ENCODE measurements at regions of chr20 and their contacts with region 1.

Region 1: GRCh38 chr20:9609887-9610502 is 95.6 kb downstream of the LAMP5 start:
- DNase-seq: peak; percentile 57 to 69 (median 63)
- H3K4me3 ChIP-seq: no peak overlapping the region
- H3K4me3 Mint-ChIP-seq: no peak overlapping the region
- H3K27ac ChIP-seq: no peak overlapping the region
- H3K27ac Mint-ChIP-seq: no peak overlapping the region
- H3K4me1 ChIP-seq: no peaks in the 10 kb centered on the region
- H3K4me1 Mint-ChIP-seq: no peaks in the 10 kb centered on the region
- H3K27me3 ChIP-seq: peaks cover 42 to 44% of the 10 kb centered on the region in 2 donors
- H3K27me3 Mint-ChIP-seq: peaks cover 34 to 48% (median 41%) of the 10 kb centered on the region in 3 donors
- CTCF ChIP-seq: peak; percentile 77

Region 2: GRCh38 chr20:9407805-9408421 is 202.1 kb before region 1 on chr20:
- intact Hi-C with region 1: loop called (anchors 1 to 2 kb)
- DNase-seq: peak; percentile 59 to 74 (median 65)
- H3K4me3 ChIP-seq: no peak overlapping the region
- H3K4me3 Mint-ChIP-seq: no peak overlapping the region
- H3K27ac ChIP-seq: no peak overlapping the region
- H3K27ac Mint-ChIP-seq: no peak overlapping the region
- H3K4me1 ChIP-seq: no peaks in the 10 kb centered on the region
- H3K4me1 Mint-ChIP-seq: no peaks in the 10 kb centered on the region
- H3K27me3 ChIP-seq: no peaks in the 10 kb centered on the region
- H3K27me3 Mint-ChIP-seq: peaks cover 0 to 4% (median 1%) of the 10 kb centered on the region in 3 donors
- CTCF ChIP-seq: peak; percentile 87

Region 3: GRCh38 chr20:9474835-9475415 is 135.1 kb before region 1 on chr20:
- intact Hi-C with region 1: loop called in 1 of 2 experiments (anchors 10 kb)
- DNase-seq: no peak
- H3K4me3 ChIP-seq: no peak overlapping the region
- H3K4me3 Mint-ChIP-seq: no peak overlapping the region
- H3K27ac ChIP-seq: no peak overlapping the region
- H3K27ac Mint-ChIP-seq: no peak overlapping the region
- H3K4me1 ChIP-seq: no peaks in the 10 kb centered on the region
- H3K4me1 Mint-ChIP-seq: peaks cover 6% of the 10 kb centered on the region
- H3K27me3 ChIP-seq: no peaks in the 10 kb centered on the region
- H3K27me3 Mint-ChIP-seq: peaks cover 0 to 6% (median 2%) of the 10 kb centered on the region in 3 donors
- CTCF ChIP-seq: no peak

Region 4: DNA sequence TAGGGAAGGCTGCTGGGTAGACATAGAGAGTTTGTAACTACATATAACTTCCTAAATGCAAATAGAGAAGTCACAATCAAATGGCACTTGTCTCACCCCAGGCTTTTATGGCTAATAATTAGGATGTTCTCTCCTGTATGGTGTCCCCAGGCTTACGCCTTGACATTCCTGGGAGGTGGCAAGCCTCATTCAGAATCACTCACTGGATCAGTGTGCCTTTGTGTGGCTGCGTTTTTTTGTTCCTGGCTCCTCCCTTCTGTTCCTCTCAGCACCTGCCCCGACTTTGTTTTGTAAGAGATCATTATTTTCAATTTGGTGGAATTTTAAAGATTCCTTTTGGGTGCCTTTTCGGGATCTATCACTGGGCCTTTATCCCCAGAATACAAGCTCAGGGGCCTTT is 89.9 kb before region 1 on chr20:
- intact Hi-C with region 1: loop called in 1 of 2 experiments (anchors 10 kb)
- DNase-seq: no peak
- H3K4me3 ChIP-seq: no peak overlapping the region
- H3K4me3 Mint-ChIP-seq: peak overlapping the region in 1 of 2 donors; percentile 59
- H3K27ac ChIP-seq: no peak overlapping the region
- H3K27ac Mint-ChIP-seq: no peak overlapping the region
- H3K4me1 ChIP-seq: peaks cover 28 to 31% of the 10 kb centered on the region in 2 donors
- H3K4me1 Mint-ChIP-seq: peaks cover 33% of the 10 kb centered on the region
- H3K27me3 ChIP-seq: peaks cover 27 to 36% of the 10 kb centered on the region in 2 donors
- H3K27me3 Mint-ChIP-seq: peaks cover 39 to 44% (median 44%) of the 10 kb centered on the region in 3 donors
- CTCF ChIP-seq: no peak

Region 5: GRCh38 chr20:9660236-9660868 is 50.4 kb after region 1 on chr20:
- intact Hi-C with region 1: no loop called
- DNase-seq: no peak
- H3K4me3 ChIP-seq: no peak overlapping the region
- H3K4me3 Mint-ChIP-seq: no peak overlapping the region
- H3K27ac ChIP-seq: no peak overlapping the region
- H3K27ac Mint-ChIP-seq: no peak overlapping the region
- H3K4me1 ChIP-seq: no peaks in the 10 kb centered on the region
- H3K4me1 Mint-ChIP-seq: no peaks in the 10 kb centered on the region
- H3K27me3 ChIP-seq: no peaks in the 10 kb centered on the region
- H3K27me3 Mint-ChIP-seq: no peaks in the 10 kb centered on the region
- CTCF ChIP-seq: no peak